ENCODE measurements at regions of chr10 and their contacts with region 1.

Region 1: DNA sequence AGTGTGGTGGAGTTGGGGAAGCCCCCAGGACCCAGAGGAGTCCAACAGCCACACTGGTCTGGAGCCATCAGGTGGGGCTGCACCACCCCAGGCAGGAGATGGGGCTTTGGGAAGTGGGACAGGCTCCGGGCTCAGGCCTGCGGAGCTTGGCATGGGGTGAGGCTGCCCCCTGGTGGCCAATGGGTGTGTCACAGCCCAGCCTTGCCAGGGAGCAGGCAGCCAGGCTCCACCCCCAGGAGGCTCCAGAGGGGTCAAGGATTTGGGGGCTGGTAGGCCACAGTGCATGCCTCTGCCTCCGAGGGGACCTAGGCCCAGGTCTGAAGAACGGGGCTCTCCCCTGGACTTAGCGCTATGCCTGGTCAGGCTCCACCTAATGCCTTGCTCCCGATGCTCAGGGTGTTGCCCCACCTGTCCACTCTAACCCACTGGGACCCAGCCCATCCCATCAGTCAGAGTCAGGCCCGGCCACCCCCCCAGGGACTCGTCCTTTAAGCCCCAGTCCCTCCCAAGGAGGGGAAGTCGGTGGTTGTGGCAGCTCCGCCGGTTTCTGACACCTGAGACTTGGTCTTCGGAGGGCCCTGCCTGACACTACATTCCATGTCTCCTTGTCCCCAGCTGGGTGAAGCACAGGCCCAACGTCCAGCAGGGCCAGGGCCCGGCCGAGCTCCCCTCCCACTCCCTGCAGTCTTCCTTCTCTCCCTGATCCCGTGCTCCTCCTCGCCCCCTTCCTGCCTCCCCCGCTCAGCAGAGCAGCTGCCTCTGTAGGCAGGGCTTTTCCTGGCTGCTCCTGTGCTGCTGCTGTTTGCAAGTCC is 11.3 kb upstream of the SAMD8 start:
- DNase-seq: no peak
- ATAC-seq: peak; percentile 91
- H3K4me3 ChIP-seq: peak overlapping the region in 1 of 2 experiments; percentile 16; a peak in 1 of 4 replicates
- H3K27ac ChIP-seq: no peak overlapping the region
- H3K4me1 ChIP-seq: peaks cover 7% of the 10 kb centered on the region; the same call in 1 of the 2 replicates
- H3K27me3 ChIP-seq: no peaks in the 10 kb centered on the region
- CTCF ChIP-seq: peak; percentile 99

Region 2: DNA sequence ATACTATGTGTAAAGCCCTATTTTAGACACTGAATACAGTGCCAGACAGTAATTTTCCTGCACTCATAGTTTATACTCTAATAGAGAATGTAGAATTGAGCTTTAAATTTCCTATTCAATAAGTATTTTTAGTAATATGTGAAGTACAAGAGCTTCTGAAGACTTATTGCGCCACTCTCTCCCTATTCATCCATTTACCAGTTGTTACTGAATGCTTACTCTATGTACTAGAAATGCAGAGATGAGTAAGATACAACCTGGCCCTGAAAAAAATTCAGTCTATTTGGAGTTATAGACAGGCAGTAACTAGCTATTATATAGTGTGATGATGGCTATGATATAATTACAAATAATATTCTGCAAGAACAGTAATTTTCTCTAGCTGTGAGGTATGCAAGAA is 850.3 kb before region 1 on chr10:
- CTCF ChIA-PET with region 1: no interaction called
- POLR2A ChIA-PET with region 1: interaction called, 10 read pairs
- in situ Hi-C with region 1: no loop called
- intact Hi-C with region 1: loop called (anchors 5 kb)
- DNase-seq: no peak
- ATAC-seq: no peak
- H3K4me3 ChIP-seq: no peak overlapping the region
- H3K27ac ChIP-seq: no peak overlapping the region
- H3K4me1 ChIP-seq: no peaks in the 10 kb centered on the region
- H3K27me3 ChIP-seq: no peaks in the 10 kb centered on the region
- CTCF ChIP-seq: no peak

Region 3: DNA sequence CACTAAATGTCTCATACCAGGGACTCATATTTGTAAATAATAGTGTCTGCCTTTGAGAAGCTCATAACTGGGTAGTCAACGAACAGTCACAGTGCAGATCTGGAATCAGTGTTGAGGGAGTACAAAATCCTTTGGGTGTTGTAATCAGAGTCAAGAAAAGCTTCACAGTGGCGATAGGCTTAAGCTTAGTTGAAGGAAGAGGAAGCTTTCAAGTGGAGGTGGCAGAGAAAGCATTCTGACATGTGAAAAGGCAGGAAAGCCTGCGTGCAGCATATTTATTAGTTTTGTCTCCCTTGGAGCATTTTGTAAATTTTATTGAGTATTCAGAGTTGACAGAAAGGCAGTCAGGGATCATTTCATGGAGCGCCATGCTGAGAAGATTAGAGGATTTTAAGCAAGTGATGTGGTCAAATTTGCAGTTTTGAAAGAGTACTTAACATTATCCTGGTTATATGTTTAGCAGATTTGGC is 844.2 kb before region 1 on chr10:
- CTCF ChIA-PET with region 1: no interaction called
- POLR2A ChIA-PET with region 1: interaction called, 10 read pairs
- in situ Hi-C with region 1: no loop called
- intact Hi-C with region 1: no loop called
- DNase-seq: no peak
- ATAC-seq: no peak
- H3K4me3 ChIP-seq: no peak overlapping the region
- H3K27ac ChIP-seq: no peak overlapping the region
- H3K4me1 ChIP-seq: no peaks in the 10 kb centered on the region; the same call in 1 of the 2 replicates
- H3K27me3 ChIP-seq: no peaks in the 10 kb centered on the region
- CTCF ChIP-seq: no peak

Region 4: GRCh38 chr10:74262856-74263255 is 837.3 kb before region 1 on chr10:
- CTCF ChIA-PET with region 1: no interaction called
- POLR2A ChIA-PET with region 1: interaction called, 6 read pairs
- in situ Hi-C with region 1: no loop called
- intact Hi-C with region 1: loop called (anchors 2 kb)
- DNase-seq: no peak
- ATAC-seq: no peak
- H3K4me3 ChIP-seq: no peak overlapping the region
- H3K27ac ChIP-seq: no peak overlapping the region
- H3K4me1 ChIP-seq: no peaks in the 10 kb centered on the region; the same call in 1 of the 2 replicates
- H3K27me3 ChIP-seq: no peaks in the 10 kb centered on the region
- CTCF ChIP-seq: no peak

Region 5: GRCh38 chr10:74677951-74678350 is 422.2 kb before region 1 on chr10:
- CTCF ChIA-PET with region 1: interaction called, 12 read pairs
- POLR2A ChIA-PET with region 1: no interaction called
- in situ Hi-C with region 1: no loop called
- intact Hi-C with region 1: no loop called
- DNase-seq: no peak
- ATAC-seq: no peak
- H3K4me3 ChIP-seq: no peak overlapping the region
- H3K27ac ChIP-seq: no peak overlapping the region
- H3K4me1 ChIP-seq: no peaks in the 10 kb centered on the region
- H3K27me3 ChIP-seq: no peaks in the 10 kb centered on the region
- CTCF ChIP-seq: no peak

Region 6: DNA sequence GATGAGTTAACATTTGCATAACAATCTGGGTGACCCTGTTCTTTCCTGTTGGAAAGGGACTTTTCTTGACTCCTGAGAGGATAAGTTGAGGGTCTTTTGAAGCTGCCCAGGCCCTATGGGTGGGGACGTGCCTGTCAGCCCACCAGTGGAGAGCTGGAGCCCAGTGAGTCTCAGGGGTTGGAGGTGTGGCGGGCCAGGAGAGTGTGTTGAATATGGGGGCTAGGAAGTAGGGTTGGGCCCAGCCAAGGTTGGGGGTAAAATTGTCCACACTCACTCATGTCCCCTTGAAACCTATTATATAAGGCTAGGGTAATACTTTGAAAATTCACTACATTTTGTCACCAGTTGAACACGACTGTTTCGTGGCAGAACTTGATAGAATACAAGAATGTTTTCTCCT is 291.7 kb before region 1 on chr10:
- CTCF ChIA-PET with region 1: no interaction called
- POLR2A ChIA-PET with region 1: no interaction called
- in situ Hi-C with region 1: no loop called
- intact Hi-C with region 1: no loop called
- DNase-seq: no peak
- ATAC-seq: no peak
- H3K4me3 ChIP-seq: no peak overlapping the region
- H3K27ac ChIP-seq: no peak overlapping the region
- H3K4me1 ChIP-seq: no peaks in the 10 kb centered on the region
- H3K27me3 ChIP-seq: no peaks in the 10 kb centered on the region
- CTCF ChIP-seq: no peak

Region 7: DNA sequence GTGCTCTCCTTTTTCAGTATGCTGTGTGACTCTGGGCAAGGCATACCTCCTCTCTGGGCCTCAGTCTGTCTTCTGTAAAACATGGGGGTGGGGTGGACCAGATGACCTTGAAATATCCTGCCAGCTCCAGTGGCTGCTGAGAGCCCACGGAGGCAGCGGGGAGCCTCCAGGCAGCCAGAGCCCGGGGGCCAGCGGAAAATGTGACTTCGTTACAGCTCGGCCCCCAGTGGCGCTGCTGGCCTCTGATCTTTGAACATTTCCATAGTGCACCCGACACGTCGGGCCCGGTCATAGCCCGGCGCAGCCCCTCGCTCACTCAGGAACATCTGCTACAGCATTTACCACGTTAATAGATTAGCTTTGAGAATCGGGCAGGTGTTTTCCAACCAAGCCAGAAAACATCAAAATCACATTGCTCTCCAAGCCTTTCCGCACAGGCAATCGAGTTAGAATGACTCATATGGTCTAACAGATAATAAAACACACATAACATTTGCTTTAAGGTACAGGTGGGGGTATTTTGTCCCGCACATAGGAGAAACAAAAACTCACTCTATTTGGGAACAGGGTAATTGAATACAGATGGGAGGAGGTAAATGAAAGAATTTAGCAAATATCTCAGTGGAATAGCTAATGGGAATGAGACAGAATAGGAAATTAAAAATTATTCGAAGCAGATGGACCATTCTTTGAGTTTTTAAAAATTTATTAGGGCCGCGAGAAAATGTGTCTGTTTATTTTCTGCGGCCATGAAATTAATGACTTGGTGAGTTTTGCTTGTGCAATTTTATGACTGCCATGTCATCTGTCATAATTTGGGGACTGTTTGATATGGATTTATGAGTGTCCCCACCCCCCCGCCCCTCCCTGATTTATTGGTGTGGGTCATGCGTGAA is 161.9 kb after region 1 on chr10:
- CTCF ChIA-PET with region 1: no interaction called
- POLR2A ChIA-PET with region 1: no interaction called
- in situ Hi-C with region 1: no loop called
- intact Hi-C with region 1: no loop called
- DNase-seq: no peak
- ATAC-seq: no peak
- H3K4me3 ChIP-seq: no peak overlapping the region
- H3K27ac ChIP-seq: no peak overlapping the region
- H3K4me1 ChIP-seq: no peaks in the 10 kb centered on the region
- H3K27me3 ChIP-seq: no peaks in the 10 kb centered on the region
- CTCF ChIP-seq: no peak

Measured in Panc1 (cell line).